Heart left ventricle (tissue), 16 donors: ENCODE measurements at regions of chr3 and their contacts with region 1.

Region 1: DNA sequence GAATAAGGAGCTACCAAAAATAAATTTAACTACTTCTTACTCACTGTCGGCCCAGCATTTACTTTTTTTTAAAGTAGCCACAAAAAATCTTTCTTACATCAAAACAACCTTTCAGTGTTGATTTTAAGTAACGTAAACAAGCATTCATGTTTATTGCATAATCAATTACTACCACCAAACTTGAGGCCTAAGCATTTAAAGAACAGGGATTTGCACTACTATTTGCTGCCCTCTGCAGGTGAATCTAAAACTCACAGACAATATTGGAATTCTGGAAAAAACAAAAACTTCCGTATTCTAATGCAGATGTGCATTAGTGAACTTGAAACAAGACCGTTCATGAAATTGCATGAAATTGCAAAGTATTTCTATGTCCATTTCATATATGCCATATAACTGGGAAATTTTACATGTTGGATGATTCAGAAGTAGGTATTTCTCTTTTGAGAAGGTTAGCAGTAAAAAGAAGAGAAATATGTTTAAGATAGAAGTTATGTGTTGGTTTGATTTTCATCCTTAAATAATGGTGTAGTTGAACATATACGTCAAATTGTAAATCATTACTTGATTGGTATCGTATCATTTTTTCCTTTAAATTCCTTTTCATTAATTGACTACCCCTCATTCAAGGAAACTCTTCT is 55.6 kb downstream of the CGGBP1 start:
- DNase-seq: no peak
- ATAC-seq: no peak
- H3K4me3 ChIP-seq: no peak overlapping the region
- H3K27ac ChIP-seq: no peak overlapping the region
- H3K4me1 ChIP-seq: peaks cover 0 to 11% (median 0%) of the 10 kb centered on the region in 12 donors
- H3K27me3 ChIP-seq: peaks cover 0 to 3% (median 0%) of the 10 kb centered on the region in 9 donors
- CTCF ChIP-seq: peak; percentile 57 to 79 (median 70)
- POLR2A ChIP-seq: no peak

Region 2: GRCh38 chr3:87298111-87298718 is 705.0 kb before region 1 on chr3:
- intact Hi-C with region 1: loop called in 2 of 10 experiments (anchors 5 kb)
- DNase-seq: no peak
- ATAC-seq: peak in 1 of 4 donors; percentile 46
- H3K4me3 ChIP-seq: no peak overlapping the region
- H3K27ac ChIP-seq: no peak overlapping the region
- H3K4me1 ChIP-seq: peaks cover 0 to 4% (median 0%) of the 10 kb centered on the region in 12 donors
- H3K27me3 ChIP-seq: no peaks in the 10 kb centered on the region
- CTCF ChIP-seq: peak; percentile 39 to 79 (median 62)
- POLR2A ChIP-seq: no peak

Region 3: GRCh38 chr3:87350364-87351199 is 652.7 kb before region 1 on chr3:
- intact Hi-C with region 1: loop called in 9 of 10 experiments (anchors 1 to 10 kb)
- DNase-seq: no peak
- ATAC-seq: peak in 3 of 4 donors; percentile 61 to 78 (median 70)
- H3K4me3 ChIP-seq: no peak overlapping the region
- H3K27ac ChIP-seq: no peak overlapping the region
- H3K4me1 ChIP-seq: no peaks in the 10 kb centered on the region
- H3K27me3 ChIP-seq: no peaks in the 10 kb centered on the region
- CTCF ChIP-seq: peak; percentile 73 to 95 (median 86)
- POLR2A ChIP-seq: no peak

Region 4: DNA sequence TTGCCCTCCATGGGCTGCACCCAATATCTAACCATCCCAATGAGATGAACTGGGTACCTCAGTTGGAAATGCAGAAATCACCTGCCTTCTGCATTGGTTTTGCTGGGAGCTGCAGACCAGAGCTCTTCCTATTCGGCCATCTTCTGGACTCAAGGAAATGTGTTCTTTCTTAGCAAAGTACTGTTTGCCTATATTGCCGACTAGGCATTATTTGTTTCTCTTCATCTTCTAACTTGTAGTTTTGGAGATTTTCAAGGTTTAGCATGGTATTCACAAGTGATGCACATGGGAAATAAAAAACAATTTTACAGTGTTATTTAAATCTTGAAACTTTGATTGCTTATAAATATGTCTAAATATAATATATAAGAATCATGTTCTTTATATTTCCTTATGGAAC is 349.1 kb before region 1 on chr3:
- intact Hi-C with region 1: no loop called
- DNase-seq: no peak
- ATAC-seq: no peak
- H3K4me3 ChIP-seq: no peak overlapping the region
- H3K27ac ChIP-seq: no peak overlapping the region
- H3K4me1 ChIP-seq: no peaks in the 10 kb centered on the region
- H3K27me3 ChIP-seq: no peaks in the 10 kb centered on the region
- CTCF ChIP-seq: no peak
- POLR2A ChIP-seq: no peak

Region 5: GRCh38 chr3:87771341-87772192 is 231.7 kb before region 1 on chr3:
- intact Hi-C with region 1: loop called in 6 of 10 experiments (anchors 5 to 10 kb)
- DNase-seq: peak in 1 of 5 donors; percentile 25
- ATAC-seq: peak in 1 of 4 donors; percentile 61
- H3K4me3 ChIP-seq: no peak overlapping the region
- H3K27ac ChIP-seq: no peak overlapping the region
- H3K4me1 ChIP-seq: no peaks in the 10 kb centered on the region
- H3K27me3 ChIP-seq: peaks cover 0 to 6% (median 0%) of the 10 kb centered on the region in 9 donors
- CTCF ChIP-seq: peak in 11 of 12 donors; percentile 27 to 58 (median 45)
- POLR2A ChIP-seq: no peak

Region 6: GRCh38 chr3:87901141-87901540 is 102.1 kb before region 1 on chr3:
- intact Hi-C with region 1: no loop called
- DNase-seq: no peak
- ATAC-seq: no peak
- H3K4me3 ChIP-seq: no peak overlapping the region
- H3K27ac ChIP-seq: no peak overlapping the region
- H3K4me1 ChIP-seq: no peaks in the 10 kb centered on the region
- H3K27me3 ChIP-seq: peaks cover 0 to 4% (median 0%) of the 10 kb centered on the region in 9 donors
- CTCF ChIP-seq: no peak
- POLR2A ChIP-seq: no peak